Caco-2 (cell line): ENCODE measurements at regions of chr2 and their contacts with region 1.

Region 1: DNA sequence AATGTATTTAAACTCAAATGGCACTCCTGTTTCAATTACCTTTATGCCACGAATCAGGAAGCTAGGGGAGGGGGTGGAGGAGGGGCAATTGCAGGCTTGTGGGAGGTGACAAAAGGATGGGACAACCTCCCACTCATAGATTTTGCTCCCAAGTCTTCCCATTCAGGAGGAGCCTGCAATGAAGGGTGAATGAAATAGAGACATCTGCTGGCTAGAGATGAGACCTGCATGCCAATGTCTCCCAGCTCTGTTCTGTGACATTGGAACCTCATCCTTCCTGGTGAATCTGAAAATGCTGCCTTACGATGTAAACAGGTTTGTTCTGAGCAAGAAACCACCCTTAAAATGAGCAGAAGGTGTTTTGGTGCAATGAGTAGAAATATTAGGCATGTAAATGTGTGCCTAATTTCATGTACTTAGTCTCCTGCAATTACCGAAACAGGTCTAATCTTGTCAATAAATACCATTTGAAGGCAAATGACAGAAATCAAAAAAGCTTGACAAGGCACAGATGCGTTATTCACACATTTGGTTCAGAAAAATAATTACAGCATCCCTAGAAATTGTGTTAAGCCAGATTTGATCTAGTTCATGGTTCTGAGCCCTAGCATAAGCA is 2.7 kb upstream of the PID1 start:
- DNase-seq: peak; percentile 75 to 81
- H3K4me3 ChIP-seq: peak overlapping the region; percentile 23
- H3K4me3 Mint-ChIP-seq: peak overlapping the region; percentile 59
- H3K27ac Mint-ChIP-seq: peak overlapping the region; percentile 32
- H3K4me1 ChIP-seq: peaks cover 14% of the 10 kb centered on the region
- H3K4me1 Mint-ChIP-seq: peaks cover 13% of the 10 kb centered on the region
- H3K27me3 ChIP-seq: no peaks in the 10 kb centered on the region
- H3K27me3 Mint-ChIP-seq: no peaks in the 10 kb centered on the region
- CTCF ChIP-seq: peak; percentile 65 to 67

Region 2: DNA sequence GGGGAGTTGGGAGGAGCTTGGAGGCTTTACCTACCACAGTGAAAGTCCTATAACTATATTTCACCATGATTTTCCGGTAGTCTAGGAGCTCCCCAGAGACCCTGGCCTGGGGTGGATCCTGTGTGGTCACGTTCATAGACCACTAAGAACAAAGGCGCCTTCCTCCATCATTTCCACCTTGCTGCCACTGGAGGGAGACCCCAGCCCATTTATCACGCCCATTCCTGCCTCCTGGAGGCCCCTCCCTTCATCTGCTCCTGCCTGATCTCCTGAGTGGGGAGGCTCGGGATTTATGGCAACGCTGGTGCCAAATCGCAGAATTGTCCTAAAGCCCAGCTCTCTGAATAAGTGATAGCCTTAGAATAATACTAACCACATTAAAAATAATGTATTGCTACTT is 584.8 kb before region 1 on chr2:
- CTCF ChIA-PET with region 1: no interaction called
- POLR2A ChIA-PET with region 1: no interaction called
- intact Hi-C with region 1: loop called (anchors 1 kb)
- DNase-seq: peak; percentile 32 to 37
- H3K4me3 ChIP-seq: no peak overlapping the region
- H3K4me3 Mint-ChIP-seq: no peak overlapping the region
- H3K27ac Mint-ChIP-seq: no peak overlapping the region
- H3K4me1 ChIP-seq: no peaks in the 10 kb centered on the region
- H3K4me1 Mint-ChIP-seq: peaks cover 7% of the 10 kb centered on the region
- H3K27me3 ChIP-seq: no peaks in the 10 kb centered on the region
- H3K27me3 Mint-ChIP-seq: peaks cover 3% of the 10 kb centered on the region
- CTCF ChIP-seq: peak; percentile 44 to 47

Region 3: DNA sequence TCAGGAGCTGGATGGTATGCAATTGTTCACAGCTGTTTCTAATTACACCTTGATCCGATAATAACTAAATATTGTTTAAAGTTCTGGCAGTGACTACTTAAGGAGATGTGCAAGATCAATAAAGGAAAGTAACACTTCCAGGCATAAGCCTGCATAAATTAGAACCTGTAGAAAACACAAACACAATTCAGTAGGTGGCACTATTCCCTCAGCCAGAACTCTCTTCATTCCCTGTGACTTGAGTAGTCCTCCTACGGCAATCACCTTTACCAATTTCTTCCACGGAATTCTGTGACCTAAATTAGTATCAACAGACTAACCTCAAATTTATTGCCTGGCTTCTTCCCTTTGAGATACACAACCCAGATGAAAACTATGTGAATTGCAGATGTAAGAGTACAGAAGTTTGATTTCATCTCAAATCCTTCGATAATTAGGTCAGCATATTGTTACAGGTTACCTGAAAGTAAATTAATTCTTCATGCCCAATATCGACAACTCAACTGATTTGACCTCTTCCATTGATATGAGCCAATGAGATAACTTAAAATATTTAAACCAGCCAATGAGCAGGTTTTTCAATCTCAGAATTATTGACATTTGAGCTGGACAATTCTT is 140.6 kb before region 1 on chr2:
- CTCF ChIA-PET with region 1: interaction called, 4 read pairs
- POLR2A ChIA-PET with region 1: no interaction called
- intact Hi-C with region 1: loop called (anchors 1 kb)
- DNase-seq: peak in 1 of 2 experiments; percentile 54
- H3K4me3 ChIP-seq: no peak overlapping the region
- H3K4me3 Mint-ChIP-seq: no peak overlapping the region
- H3K27ac Mint-ChIP-seq: no peak overlapping the region
- H3K4me1 ChIP-seq: no peaks in the 10 kb centered on the region
- H3K4me1 Mint-ChIP-seq: no peaks in the 10 kb centered on the region
- H3K27me3 ChIP-seq: no peaks in the 10 kb centered on the region
- H3K27me3 Mint-ChIP-seq: no peaks in the 10 kb centered on the region
- CTCF ChIP-seq: peak; percentile 36 to 46

Region 4: DNA sequence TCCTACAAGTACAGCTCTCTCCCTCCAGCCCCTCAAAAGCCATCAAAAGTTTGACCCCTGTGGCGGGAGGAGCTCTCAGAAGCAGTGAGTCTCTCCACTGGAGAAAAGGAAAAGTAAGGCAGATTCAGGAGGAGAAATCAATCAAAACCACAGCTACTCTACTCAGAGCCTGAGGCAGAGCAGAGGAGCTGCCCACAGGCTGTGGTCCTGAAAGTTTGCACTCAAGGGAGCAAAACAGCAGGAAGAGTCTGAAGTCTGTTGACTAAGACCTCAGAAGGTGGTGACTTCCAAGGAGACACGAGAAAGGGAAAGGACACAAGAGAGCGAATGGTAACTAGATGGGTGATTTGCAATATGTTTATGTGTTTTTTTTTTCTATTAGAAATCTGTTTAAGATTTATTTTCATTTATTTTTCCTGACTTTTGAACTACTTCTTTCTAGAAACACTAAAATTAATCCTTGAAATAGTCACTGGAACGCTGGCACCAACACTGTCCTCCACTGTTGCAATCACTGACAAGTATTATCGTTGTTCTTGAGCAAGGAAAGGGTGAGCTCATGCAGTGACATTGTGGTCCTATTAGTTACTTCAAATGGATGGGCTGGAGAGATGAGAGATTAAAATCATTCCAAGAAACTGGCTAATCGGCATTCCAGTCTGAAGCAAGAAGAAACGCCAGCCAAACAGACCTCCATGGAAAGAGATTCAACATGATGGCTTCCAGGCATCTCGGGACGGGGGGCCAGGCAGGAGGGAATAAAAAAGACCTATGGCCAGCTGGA is 38.5 kb before region 1 on chr2:
- CTCF ChIA-PET with region 1: no interaction called
- POLR2A ChIA-PET with region 1: no interaction called
- intact Hi-C with region 1: loop called (anchors 1 kb)
- DNase-seq: peak; percentile 18 to 35
- H3K4me3 ChIP-seq: no peak overlapping the region
- H3K4me3 Mint-ChIP-seq: no peak overlapping the region
- H3K27ac Mint-ChIP-seq: no peak overlapping the region
- H3K4me1 ChIP-seq: no peaks in the 10 kb centered on the region
- H3K4me1 Mint-ChIP-seq: peaks cover 6% of the 10 kb centered on the region
- H3K27me3 ChIP-seq: no peaks in the 10 kb centered on the region
- H3K27me3 Mint-ChIP-seq: no peaks in the 10 kb centered on the region
- CTCF ChIP-seq: no peak